ENCODE measurements at regions of chr5 and their contacts with region 1.

Region 1: GRCh38 chr5:121867401-121867800 is 15.7 kb downstream of the FTMT start:
- DNase-seq: no peak
- ATAC-seq: no peak
- H3K4me3 ChIP-seq: no peak overlapping the region
- H3K27ac ChIP-seq: no peak overlapping the region
- H3K4me1 ChIP-seq: no peaks in the 10 kb centered on the region
- H3K27me3 ChIP-seq: no peaks in the 10 kb centered on the region
- CTCF ChIP-seq: no peak
- EP300 ChIP-seq: no peak
- POLR2A ChIP-seq: no peak
- RAD21 ChIP-seq: no peak

Region 2: GRCh38 chr5:121630402-121630801 is 237.0 kb before region 1 on chr5:
- CTCF ChIA-PET with region 1: no interaction called
- POLR2A ChIA-PET with region 1: no interaction called
- in situ Hi-C with region 1: no loop called
- intact Hi-C with region 1: loop called (anchors 5 kb)
- DNase-seq: peak in 1 of 4 experiments; percentile 2
- ATAC-seq: no peak
- H3K4me3 ChIP-seq: no peak overlapping the region
- H3K27ac ChIP-seq: no peak overlapping the region
- H3K4me1 ChIP-seq: no peaks in the 10 kb centered on the region
- H3K27me3 ChIP-seq: no peaks in the 10 kb centered on the region
- CTCF ChIP-seq: no peak
- EP300 ChIP-seq: no peak
- POLR2A ChIP-seq: no peak
- RAD21 ChIP-seq: peak in 1 of 2 experiments; percentile 53; a peak in 2 of 4 replicates

Region 3: DNA sequence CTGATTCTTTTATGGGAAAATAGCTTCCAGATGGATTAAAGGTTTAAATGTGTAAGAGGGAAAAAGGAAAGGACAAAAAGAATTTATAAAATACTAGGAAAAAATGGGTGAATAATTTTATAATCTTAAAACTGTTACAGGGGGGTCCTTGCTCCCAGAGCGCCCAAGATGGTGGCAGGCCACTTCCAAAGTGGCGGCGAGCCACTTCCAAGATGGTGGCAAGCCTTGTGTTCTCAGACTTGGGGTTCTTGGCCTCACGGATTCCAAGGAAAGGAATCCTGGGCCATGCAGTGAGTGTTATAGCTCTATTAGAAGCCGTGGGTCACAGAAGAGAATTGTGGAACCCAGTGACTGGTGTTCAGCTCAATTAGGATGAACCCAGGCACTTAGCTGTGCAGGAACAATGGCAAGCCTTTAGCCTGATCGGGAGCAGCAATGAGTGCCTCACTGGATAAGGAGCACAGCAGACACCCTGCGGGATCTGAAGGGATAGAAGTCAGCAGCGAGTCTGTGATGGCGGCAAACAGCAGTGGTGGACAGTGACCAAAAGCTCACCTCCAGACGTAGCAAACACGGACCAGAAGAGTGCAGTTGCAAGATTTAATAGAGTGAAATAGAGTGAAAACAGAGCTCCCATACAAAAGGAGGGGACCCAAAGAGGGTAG is 361.5 kb after region 1 on chr5:
- CTCF ChIA-PET with region 1: no interaction called
- POLR2A ChIA-PET with region 1: no interaction called
- in situ Hi-C with region 1: no loop called
- intact Hi-C with region 1: no loop called
- DNase-seq: no peak
- ATAC-seq: peak; percentile 55; the same call in 2 of the 3 replicates
- H3K4me3 ChIP-seq: peak overlapping the region; percentile 12; the same call in 1 of the 2 replicates
- H3K27ac ChIP-seq: no peak overlapping the region
- H3K4me1 ChIP-seq: no peaks in the 10 kb centered on the region
- H3K27me3 ChIP-seq: no peaks in the 10 kb centered on the region
- CTCF ChIP-seq: no peak
- EP300 ChIP-seq: no peak
- POLR2A ChIP-seq: no peak
- RAD21 ChIP-seq: no peak